CD8-positive, alpha-beta memory T cell (primary cell): ENCODE measurements at regions of chr15 and their contacts with region 1.

Region 1: GRCh38 chr15:74781431-74782258 is at the start of gene CSK:
- DNase-seq: peak; percentile 76 to 87 (median 83)
- H3K4me3 ChIP-seq: peak within 1 kb of the TSS; percentile 99
- H3K4me3 Mint-ChIP-seq: peak within 1 kb of the TSS; percentile 85 to 98 (median 95)
- H3K27ac ChIP-seq: peak within 1 kb of the TSS; percentile 74
- H3K27ac Mint-ChIP-seq: peak within 1 kb of the TSS; percentile 93 to 100 (median 98)
- H3K4me1 ChIP-seq: peaks cover 66% of the 10 kb centered on the region
- H3K4me1 Mint-ChIP-seq: peaks cover 71 to 81% (median 76%) of the 10 kb centered on the region in 3 donors
- H3K27me3 ChIP-seq: no peaks in the 10 kb centered on the region
- H3K27me3 Mint-ChIP-seq: peaks cover 0 to 5% of the 10 kb centered on the region in 2 donors
- total RNA-seq, gene CSK: 288 to 294 TPM

Region 2: GRCh38 chr15:74793135-74794028 is 11.7 kb after region 1 on chr15:
- CTCF ChIA-PET with region 1: interaction called, 1,086 read pairs
- POLR2A ChIA-PET with region 1: interaction called, 89 read pairs
- DNase-seq: peak; percentile 71 to 85 (median 74)
- H3K4me3 ChIP-seq: peak overlapping the region; percentile 46
- H3K4me3 Mint-ChIP-seq: peak overlapping the region; percentile 66 to 91 (median 85)
- H3K27ac ChIP-seq: no peak overlapping the region
- H3K27ac Mint-ChIP-seq: peak overlapping the region; percentile 81 to 98 (median 93)
- H3K4me1 ChIP-seq: peaks cover 99% of the 10 kb centered on the region
- H3K4me1 Mint-ChIP-seq: peaks cover 84 to 93% (median 89%) of the 10 kb centered on the region in 3 donors
- H3K27me3 ChIP-seq: no peaks in the 10 kb centered on the region
- H3K27me3 Mint-ChIP-seq: no peaks in the 10 kb centered on the region

Region 3: GRCh38 chr15:74799856-74800547 is 18.4 kb after region 1 on chr15:
- CTCF ChIA-PET with region 1: interaction called, 1,086 read pairs
- POLR2A ChIA-PET with region 1: interaction called, 89 read pairs
- DNase-seq: peak; percentile 81 to 91 (median 85)
- H3K4me3 ChIP-seq: peak overlapping the region; percentile 32
- H3K4me3 Mint-ChIP-seq: peak overlapping the region in 6 of 7 donors; percentile 19 to 40 (median 26)
- H3K27ac ChIP-seq: peak overlapping the region; percentile 65
- H3K27ac Mint-ChIP-seq: peak overlapping the region; percentile 79 to 97 (median 94)
- H3K4me1 ChIP-seq: peaks cover 57% of the 10 kb centered on the region
- H3K4me1 Mint-ChIP-seq: peaks cover 42 to 53% (median 48%) of the 10 kb centered on the region in 3 donors
- H3K27me3 ChIP-seq: no peaks in the 10 kb centered on the region
- H3K27me3 Mint-ChIP-seq: no peaks in the 10 kb centered on the region

Region 4: DNA sequence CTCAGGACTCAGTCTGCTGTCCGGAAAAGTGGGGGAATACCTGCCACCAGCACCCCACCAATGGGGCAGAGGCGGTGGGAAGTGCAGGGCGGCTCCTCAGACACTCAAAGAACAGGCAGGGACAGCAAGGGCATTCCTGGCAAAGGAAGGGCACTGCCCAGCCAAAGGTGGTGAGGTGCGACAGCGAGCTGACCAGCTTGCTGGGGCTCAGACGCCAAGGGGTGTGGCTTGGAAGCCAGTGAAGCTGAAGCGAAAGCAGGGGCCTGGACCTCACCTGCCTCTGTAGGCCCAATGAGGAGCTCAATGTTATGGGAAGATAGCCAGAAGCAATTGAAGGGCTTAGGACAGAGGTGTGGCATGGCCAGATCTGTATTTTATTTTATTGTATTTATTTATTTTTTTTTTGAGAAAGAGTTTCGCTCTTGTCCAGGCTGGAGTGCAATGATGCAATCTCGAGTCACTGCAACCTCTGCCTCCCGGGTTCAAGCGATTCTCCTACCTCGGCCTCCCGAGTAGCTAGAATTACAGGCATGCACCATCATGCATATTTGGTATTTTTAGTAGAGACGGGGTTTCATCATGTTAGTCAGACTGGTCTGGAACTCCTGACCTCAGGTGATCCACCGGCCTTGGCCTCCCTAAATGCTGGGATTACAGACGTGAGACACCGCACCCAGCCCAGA is 26.6 kb after region 1 on chr15:
- CTCF ChIA-PET with region 1: interaction called, 24 read pairs
- POLR2A ChIA-PET with region 1: interaction called, 5 read pairs
- DNase-seq: no peak
- H3K4me3 ChIP-seq: no peak overlapping the region
- H3K4me3 Mint-ChIP-seq: no peak overlapping the region
- H3K27ac ChIP-seq: no peak overlapping the region
- H3K27ac Mint-ChIP-seq: peak overlapping the region; percentile 73 to 96 (median 84)
- H3K4me1 ChIP-seq: peaks cover 16% of the 10 kb centered on the region
- H3K4me1 Mint-ChIP-seq: peaks cover 26 to 35% (median 34%) of the 10 kb centered on the region in 3 donors
- H3K27me3 ChIP-seq: no peaks in the 10 kb centered on the region
- H3K27me3 Mint-ChIP-seq: no peaks in the 10 kb centered on the region